CD8-positive, alpha-beta T cell (primary cell): ENCODE measurements at regions of chr14 and their contacts with region 1.

Region 1: DNA sequence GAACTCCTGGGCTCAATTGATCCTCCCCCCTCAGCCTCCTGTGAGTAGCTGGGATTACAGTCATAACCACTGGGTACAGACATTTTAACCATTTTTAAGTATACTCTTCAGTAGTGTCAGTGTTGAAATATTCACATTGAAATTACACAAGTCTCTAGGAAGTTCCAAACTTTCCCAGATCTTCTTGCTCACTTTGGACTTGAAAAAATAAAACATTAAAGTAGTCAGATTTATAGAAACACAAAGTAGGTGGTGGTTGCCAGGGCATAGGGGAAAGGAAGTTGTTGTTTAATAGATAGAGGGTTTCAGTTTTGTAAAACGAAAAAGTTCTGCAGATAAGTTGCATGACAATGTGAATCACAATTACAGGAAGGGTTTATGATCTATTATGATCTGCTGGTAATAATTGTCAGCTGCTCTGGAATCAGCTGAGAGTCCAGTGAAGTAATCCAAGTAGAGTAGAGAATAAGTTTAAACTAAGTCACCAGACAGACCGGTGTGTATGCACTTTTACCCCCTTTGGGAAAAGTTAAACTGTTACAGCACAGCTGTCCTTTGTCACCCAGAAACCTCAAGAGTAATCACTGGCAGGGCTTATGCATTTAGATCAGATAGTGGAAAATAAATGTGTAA is 27.4 kb downstream of the PCNX1 start:
- DNase-seq: peak in 1 of 9 experiments; percentile 37
- ATAC-seq: peak; percentile 67
- H3K4me3 ChIP-seq: peak overlapping the region in 1 of 2 experiments; percentile 8
- H3K4me3 Mint-ChIP-seq: peak overlapping the region; percentile 66
- H3K27ac ChIP-seq: peak overlapping the region; percentile 18 to 61
- H3K27ac Mint-ChIP-seq: peak overlapping the region; percentile 84
- H3K4me1 ChIP-seq: peaks cover 25% of the 10 kb centered on the region
- H3K4me1 Mint-ChIP-seq: peaks cover 84% of the 10 kb centered on the region
- H3K27me3 ChIP-seq: no peaks in the 10 kb centered on the region
- H3K27me3 Mint-ChIP-seq: no peaks in the 10 kb centered on the region
- CTCF ChIP-seq: no peak

Region 2: DNA sequence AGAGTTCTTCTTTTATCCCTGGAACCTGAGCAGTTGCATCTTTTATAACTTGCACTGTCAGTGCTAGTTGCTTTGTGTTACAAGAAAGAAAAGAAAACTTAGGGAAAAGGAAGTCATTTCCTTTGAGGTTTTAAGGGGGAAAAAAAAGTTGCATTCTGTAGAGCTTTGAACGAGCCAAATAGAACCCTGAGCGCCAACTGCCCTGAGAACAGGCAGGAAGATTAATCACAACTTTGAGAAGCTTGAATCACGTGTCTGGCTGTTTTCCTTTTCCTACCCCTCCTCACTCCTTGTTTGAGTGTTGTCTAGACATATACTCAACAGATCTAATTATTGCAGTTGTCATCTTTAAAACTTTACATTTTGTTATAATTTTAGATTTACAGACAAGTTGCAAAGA is 14.8 kb before region 1 on chr14:
- CTCF ChIA-PET with region 1: interaction called, 4 read pairs
- POLR2A ChIA-PET with region 1: interaction called, 9 read pairs
- intact Hi-C with region 1: loop called in 1 of 2 experiments (anchors 2 kb)
- DNase-seq: peak in 3 of 9 experiments; percentile 27 to 50 (median 32)
- ATAC-seq: peak; percentile 37
- H3K4me3 ChIP-seq: no peak overlapping the region
- H3K4me3 Mint-ChIP-seq: peak overlapping the region; percentile 59
- H3K27ac ChIP-seq: peak overlapping the region in 1 of 2 experiments; percentile 61
- H3K27ac Mint-ChIP-seq: peak overlapping the region; percentile 89
- H3K4me1 ChIP-seq: peaks cover 86% of the 10 kb centered on the region
- H3K4me1 Mint-ChIP-seq: peaks cover 90% of the 10 kb centered on the region
- H3K27me3 ChIP-seq: no peaks in the 10 kb centered on the region
- H3K27me3 Mint-ChIP-seq: no peaks in the 10 kb centered on the region
- CTCF ChIP-seq: no peak

Region 3: DNA sequence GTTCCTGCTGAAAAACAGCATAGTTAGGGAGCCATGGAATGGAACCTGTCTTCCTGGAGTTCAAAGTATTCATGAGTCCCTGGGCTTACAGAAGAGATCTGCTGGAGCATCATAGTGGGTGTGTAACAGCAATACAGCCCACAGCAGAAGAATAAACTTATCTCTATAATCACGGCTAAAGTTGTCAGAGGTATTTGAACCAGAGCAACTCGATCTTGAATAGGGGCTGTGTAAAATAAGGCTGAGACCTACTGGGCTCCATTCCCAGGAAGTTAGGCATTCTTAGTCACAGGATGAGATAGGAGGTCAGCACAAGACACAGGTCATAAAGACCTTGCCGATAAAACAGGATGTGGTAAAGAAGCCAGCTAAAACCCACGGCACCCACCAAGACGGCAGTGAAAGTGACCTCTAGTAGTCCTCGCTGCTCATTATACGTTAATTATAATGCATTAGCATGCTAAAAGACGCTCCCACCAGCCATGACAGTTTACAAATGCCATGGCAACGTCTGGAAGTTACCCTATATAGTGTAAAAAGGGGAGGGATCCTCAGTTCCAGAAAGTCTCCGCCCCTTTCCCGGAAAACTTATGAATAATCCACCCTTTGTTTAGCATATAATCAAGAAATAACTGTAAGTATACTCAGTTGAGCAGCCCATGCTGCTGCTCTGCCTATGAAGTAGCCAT is 196.0 kb after region 1 on chr14:
- CTCF ChIA-PET with region 1: no interaction called
- POLR2A ChIA-PET with region 1: no interaction called
- intact Hi-C with region 1: no loop called
- DNase-seq: peak in 1 of 9 experiments; percentile 15
- ATAC-seq: no peak
- H3K4me3 ChIP-seq: no peak overlapping the region
- H3K4me3 Mint-ChIP-seq: no peak overlapping the region
- H3K27ac ChIP-seq: no peak overlapping the region
- H3K27ac Mint-ChIP-seq: peak overlapping the region; percentile 2
- H3K4me1 ChIP-seq: no peaks in the 10 kb centered on the region
- H3K4me1 Mint-ChIP-seq: peaks cover 12% of the 10 kb centered on the region
- H3K27me3 ChIP-seq: no peaks in the 10 kb centered on the region
- H3K27me3 Mint-ChIP-seq: peaks cover 2% of the 10 kb centered on the region
- CTCF ChIP-seq: no peak